Mammary epithelial cell (primary cell): ENCODE measurements at regions of chr7 and their contacts with region 1.

Region 1: DNA sequence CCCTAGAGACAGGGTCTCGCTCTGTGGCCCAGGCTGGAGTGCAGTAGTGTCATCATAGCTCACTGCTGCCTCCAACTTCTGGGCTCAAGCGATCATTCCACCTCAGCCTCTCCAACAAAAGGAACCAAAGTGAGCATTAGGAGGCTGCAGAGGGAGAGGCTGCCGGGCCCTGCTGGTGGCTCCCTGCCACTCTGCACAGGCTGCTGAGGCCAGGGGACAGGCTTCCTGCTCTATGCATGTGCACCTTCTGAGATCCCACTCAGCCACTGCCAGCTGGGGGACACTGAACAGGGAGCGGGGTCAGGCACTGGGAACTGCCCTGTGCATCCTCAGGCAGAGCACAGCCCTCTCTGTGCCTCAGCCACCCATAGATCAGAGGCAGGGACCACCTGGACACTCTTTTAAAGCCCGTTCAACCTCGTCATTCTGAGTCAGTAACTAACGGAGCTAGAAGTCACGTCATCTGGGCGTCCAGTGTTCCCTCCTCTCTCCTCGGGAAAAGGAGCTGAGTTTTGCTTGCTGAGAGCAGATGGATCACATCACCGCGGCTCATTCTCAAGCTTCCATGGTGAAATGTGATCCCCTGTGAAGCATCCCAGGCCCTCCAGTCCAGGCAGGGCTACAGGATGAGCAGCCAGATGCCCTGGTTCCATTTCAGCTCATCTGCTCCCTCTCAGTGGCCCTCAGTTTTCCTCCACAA is 109.6 kb downstream of the MYL10 start:
- DNase-seq: no peak
- H3K4me3 ChIP-seq: no peak overlapping the region
- H3K27ac ChIP-seq: no peak overlapping the region
- H3K4me1 ChIP-seq: no peaks in the 10 kb centered on the region
- H3K27me3 ChIP-seq: peaks cover 5% of the 10 kb centered on the region
- CTCF ChIP-seq: no peak

Region 2: DNA sequence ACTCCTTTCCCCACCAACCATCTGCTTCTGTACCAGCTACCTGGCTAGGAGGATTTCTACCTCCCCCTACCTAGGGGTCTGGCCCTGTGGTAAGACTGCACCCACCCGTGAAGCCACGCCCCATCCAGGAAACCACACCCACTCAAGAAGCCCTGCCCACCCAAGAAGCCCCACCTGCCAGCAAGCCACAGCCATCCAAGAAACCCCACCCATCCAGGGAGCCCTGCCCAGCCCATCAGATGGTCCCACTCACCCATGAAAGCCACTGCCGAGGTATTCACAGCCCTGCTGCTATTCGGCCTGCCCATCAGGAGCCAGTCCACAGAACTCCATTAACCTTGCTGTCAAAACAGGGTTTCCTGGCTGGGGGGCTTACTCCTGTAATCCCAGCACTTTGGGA is 585.7 kb before region 1 on chr7:
- CTCF ChIA-PET with region 1: no interaction called
- dilution Hi-C with region 1: loop called (anchors 10 kb)
- in situ Hi-C with region 1: no loop called
- intact Hi-C with region 1: no loop called
- DNase-seq: no peak
- H3K4me3 ChIP-seq: no peak overlapping the region
- H3K27ac ChIP-seq: no peak overlapping the region
- H3K4me1 ChIP-seq: peaks cover 13% of the 10 kb centered on the region
- H3K27me3 ChIP-seq: no peaks in the 10 kb centered on the region
- CTCF ChIP-seq: no peak

Region 3: GRCh38 chr7:101419453-101420230 is 99.8 kb before region 1 on chr7:
- CTCF ChIA-PET with region 1: no interaction called
- dilution Hi-C with region 1: loop called (anchors 5 kb)
- in situ Hi-C with region 1: no loop called
- intact Hi-C with region 1: no loop called
- DNase-seq: no peak
- H3K4me3 ChIP-seq: no peak overlapping the region
- H3K27ac ChIP-seq: no peak overlapping the region
- H3K4me1 ChIP-seq: no peaks in the 10 kb centered on the region
- H3K27me3 ChIP-seq: no peaks in the 10 kb centered on the region
- CTCF ChIP-seq: no peak

Region 4: DNA sequence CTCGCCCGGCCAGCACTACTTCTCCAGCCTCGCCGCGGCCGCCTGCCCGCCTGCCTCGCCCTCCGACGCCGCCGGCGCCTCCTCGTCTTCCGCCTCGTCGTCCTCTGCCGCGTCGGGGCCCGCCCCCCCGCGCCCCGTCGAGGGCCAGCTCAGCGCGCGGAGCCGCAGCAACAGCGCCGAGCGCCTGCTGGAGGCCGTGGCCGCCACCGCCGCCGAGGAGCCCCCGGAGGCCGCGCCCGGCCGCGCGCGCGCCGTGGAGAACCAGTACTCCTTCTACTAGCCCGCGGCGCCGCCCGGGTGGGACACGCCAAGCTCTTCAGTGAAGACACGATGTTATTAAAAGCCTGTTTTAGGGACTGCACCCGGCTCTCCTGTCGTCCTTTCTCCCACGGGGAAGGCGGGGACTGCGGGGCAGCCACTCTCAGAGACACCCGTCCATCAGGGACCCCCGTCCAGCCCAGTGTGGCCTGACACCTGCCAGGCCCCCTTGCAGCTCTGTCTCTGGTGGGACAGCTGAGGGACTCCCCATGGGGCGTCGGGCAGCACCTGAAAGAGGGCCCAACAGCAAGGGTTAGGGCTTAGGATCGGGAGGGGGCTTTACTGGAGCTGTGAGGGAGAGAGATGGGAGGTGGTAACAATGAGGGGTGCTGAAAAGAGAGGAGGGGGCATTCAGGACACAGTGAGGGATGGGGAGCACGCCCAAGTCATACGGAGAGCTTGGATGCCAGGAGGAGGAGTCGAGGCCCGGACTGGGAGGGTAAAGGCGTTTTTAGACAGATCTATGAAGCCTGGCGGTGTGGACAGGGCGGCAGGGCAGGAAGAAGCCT is 802.1 kb after region 1 on chr7:
- CTCF ChIA-PET with region 1: no interaction called
- dilution Hi-C with region 1: loop called (anchors 10 kb)
- in situ Hi-C with region 1: no loop called
- intact Hi-C with region 1: no loop called
- DNase-seq: no peak
- H3K4me3 ChIP-seq: no peak overlapping the region
- H3K27ac ChIP-seq: no peak overlapping the region
- H3K4me1 ChIP-seq: no peaks in the 10 kb centered on the region
- H3K27me3 ChIP-seq: no peaks in the 10 kb centered on the region
- CTCF ChIP-seq: no peak